Activated CD4-positive, alpha-beta memory T cell treated with anti-CD3 and anti-CD28 coated beads for 36 hours (primary cell): ENCODE measurements at regions of chr12 and their contacts with region 1.

Region 1: DNA sequence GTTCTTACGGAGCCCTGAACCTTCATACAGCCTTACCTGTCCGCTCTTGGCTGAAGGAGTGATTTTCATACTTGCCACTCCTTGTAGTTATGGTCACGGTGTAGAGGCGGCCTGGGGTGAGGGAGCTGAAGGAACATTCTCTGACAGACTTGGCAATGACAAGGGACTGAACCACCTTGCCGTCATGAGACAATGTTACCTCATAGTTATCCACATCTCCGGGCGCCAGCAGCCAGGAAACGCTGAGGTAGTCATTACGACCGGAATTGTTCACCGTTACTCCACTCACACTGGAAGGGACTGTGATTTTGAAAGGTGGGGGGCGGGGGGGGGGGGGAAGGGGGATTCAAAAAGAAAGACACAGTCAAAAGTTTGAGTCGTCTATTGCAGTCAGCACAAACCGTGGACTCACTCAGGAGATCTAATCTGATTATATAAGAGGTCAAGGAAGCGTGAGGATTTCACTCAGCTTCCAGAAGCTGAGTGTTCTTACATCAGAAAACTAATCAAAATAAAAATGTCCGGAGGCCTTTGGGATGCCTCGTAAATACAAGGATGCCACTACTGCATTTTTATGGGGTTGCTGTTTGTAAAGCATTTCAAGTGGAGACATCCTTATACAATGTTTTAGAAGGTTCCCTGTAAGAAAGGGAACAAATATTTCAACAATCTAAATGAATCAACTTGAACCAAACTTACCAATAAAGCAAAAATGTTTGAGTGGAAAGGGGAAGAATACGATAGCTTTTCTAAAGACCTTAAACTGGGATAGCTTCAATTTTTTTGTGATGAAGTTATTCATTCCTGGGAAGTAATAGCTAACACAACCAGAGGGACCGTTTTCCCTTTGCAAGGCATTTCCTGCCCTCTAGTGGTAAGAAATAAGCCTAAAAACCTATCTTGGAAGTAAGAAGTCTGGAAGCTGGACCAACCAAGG is 60.6 kb downstream of the PTPRB start:
- DNase-seq: no peak
- H3K4me3 Mint-ChIP-seq: no peak overlapping the region
- H3K27ac Mint-ChIP-seq: no peak overlapping the region
- H3K4me1 Mint-ChIP-seq: no peaks in the 10 kb centered on the region
- H3K27me3 Mint-ChIP-seq: peaks cover 5% of the 10 kb centered on the region

Region 2: DNA sequence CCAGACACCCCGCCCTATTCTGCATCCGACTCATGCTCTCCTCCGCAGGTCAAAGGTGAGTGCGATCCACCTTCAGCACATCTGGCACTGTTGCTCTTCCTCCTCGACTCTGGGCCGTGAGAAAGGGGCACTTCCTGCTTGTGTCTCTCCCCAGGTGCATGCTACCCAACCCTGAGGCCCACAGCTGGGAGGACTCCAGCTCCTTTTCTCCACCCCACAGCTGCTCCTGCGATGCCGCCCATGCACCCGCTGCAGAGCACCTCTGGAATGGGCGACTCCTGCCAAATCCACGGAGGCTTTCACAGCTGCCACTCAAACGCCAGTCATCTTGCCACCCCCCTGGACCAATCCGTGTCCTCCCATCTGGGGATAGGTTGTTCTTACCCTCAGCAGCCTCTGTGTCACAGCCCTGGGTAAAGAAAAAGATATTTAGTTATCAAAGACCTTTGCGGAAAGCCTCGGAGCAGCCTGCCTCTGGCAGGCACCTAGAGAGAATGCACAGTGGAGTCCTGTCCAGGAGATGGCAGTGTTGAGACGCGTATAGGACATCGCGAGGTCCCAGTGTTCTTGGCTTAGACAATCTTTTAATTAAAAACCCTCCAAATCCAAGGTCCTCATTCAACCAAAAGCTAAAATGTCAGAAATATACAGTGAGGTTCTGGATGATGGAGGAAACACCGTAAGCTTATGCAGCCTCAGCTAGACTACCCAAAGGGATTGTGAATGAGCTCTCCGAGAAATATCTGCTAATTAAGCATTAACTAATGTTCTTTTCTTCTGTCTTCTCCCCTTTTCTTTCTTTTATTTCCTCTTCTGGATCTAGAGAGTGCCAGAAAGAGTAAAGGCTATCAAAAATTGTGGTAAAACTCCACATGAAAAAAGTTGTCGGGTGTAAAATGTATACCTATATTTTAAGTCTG is 697.3 kb before region 1 on chr12:
- CTCF ChIA-PET with region 1: interaction called, 41 read pairs
- POLR2A ChIA-PET with region 1: no interaction called
- intact Hi-C with region 1: loop called (anchors 2 kb)
- DNase-seq: peak; percentile 72
- H3K4me3 Mint-ChIP-seq: peak overlapping the region; percentile 7
- H3K27ac Mint-ChIP-seq: no peak overlapping the region
- H3K4me1 Mint-ChIP-seq: peaks cover 7% of the 10 kb centered on the region
- H3K27me3 Mint-ChIP-seq: peaks cover 15% of the 10 kb centered on the region

Region 3: GRCh38 chr12:69906411-69907216 is 670.0 kb before region 1 on chr12:
- CTCF ChIA-PET with region 1: interaction called, 57 read pairs
- POLR2A ChIA-PET with region 1: no interaction called
- intact Hi-C with region 1: no loop called
- DNase-seq: no peak
- H3K4me3 Mint-ChIP-seq: no peak overlapping the region
- H3K27ac Mint-ChIP-seq: no peak overlapping the region
- H3K4me1 Mint-ChIP-seq: no peaks in the 10 kb centered on the region
- H3K27me3 Mint-ChIP-seq: peaks cover 5% of the 10 kb centered on the region

Region 4: DNA sequence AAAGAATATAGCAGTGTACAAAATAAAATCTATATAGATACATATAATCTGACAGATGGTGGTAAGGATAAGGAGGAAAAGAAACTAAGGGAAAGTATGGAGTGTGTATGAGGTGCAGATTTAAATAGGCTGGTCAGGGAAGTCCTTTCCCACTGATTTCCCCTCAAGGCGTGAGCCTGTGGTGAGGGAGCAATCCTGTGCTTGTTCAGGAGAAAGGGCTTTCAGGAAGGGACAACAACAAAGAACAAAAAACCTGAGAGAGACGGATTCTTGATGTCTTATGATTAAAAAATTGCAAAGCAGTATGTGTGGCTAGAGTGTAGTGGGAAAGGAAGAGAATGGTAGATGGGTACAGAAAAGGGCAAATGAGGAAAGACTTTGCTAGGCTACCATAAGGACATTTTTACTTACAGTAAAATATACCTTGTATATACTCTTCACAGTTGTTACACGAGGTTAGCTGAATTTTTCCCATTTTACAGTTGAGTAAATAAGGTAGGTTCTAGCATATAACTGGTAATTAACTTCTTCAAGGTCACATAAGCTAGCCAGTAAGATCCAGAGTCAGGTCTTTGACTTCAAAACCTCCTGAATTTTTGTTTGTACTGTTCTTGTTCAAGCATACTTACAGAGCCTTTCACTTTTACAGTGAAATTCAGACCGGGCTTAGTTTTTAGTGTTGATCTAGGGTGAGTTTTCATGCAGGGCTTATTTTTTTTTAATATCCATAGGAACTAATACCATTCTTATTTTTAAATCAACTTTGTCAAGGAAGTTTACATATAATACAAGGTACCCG is 317.8 kb before region 1 on chr12:
- CTCF ChIA-PET with region 1: no interaction called
- POLR2A ChIA-PET with region 1: no interaction called
- intact Hi-C with region 1: no loop called
- DNase-seq: no peak
- H3K4me3 Mint-ChIP-seq: no peak overlapping the region
- H3K27ac Mint-ChIP-seq: no peak overlapping the region
- H3K4me1 Mint-ChIP-seq: peaks cover 72% of the 10 kb centered on the region
- H3K27me3 Mint-ChIP-seq: no peaks in the 10 kb centered on the region